H1 (cell line): ENCODE measurements at regions of chr5 and their contacts with region 1.

Region 1: DNA sequence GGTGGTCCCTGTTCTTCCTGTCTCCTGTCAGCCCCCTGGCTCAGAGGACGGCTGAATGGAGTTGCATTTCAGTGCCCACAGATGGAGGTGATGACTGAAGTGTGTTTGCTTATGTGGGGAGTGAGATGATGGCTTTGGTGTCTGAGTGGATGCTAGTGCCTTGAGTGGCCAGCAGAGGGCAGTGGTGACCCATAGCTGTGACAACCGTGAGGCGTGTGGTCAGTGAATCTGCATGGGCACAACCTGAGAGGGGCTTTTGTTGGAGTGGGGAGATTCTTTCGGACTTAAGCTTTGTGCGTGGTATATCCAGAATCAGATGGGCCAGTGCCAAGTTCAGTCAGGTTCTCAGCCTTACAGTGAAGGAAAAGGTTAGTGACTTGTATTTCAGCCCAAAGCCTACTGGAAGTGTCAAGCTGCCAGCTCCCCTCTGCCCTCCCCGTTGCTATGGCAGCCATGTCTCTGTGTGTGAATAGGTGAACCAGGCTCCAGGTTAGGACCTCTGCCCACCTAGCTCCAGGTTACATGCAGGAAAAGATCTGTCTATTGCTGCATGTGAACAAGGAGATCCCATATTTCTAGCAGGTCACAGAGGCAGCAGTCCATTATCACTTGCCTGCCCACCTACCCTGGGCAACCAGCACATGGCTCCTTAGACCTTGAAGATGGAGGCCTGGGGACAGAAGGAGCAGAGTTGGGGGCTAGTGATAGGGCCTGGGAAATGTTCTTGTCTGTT is 14.7 kb upstream of the CXXC5 start:
- DNase-seq: peak in 1 of 2 experiments; percentile 83
- H3K4me3 ChIP-seq: no peak overlapping the region
- H3K27ac ChIP-seq: no peak overlapping the region
- H3K4me1 ChIP-seq: peaks cover 14 to 27% (median 20%) of the 10 kb centered on the region in 4 experiments
- H3K27me3 ChIP-seq: no peaks in the 10 kb centered on the region
- CTCF ChIP-seq: peak in 2 of 3 experiments; percentile 88 to 100; a peak in 3 of 4 replicates
- EP300 ChIP-seq: no peak
- POLR2A ChIP-seq: peak in 1 of 2 experiments; percentile 34; a peak in 1 of 3 replicates
- RAD21 ChIP-seq: peak; percentile 94 to 95

Region 2: DNA sequence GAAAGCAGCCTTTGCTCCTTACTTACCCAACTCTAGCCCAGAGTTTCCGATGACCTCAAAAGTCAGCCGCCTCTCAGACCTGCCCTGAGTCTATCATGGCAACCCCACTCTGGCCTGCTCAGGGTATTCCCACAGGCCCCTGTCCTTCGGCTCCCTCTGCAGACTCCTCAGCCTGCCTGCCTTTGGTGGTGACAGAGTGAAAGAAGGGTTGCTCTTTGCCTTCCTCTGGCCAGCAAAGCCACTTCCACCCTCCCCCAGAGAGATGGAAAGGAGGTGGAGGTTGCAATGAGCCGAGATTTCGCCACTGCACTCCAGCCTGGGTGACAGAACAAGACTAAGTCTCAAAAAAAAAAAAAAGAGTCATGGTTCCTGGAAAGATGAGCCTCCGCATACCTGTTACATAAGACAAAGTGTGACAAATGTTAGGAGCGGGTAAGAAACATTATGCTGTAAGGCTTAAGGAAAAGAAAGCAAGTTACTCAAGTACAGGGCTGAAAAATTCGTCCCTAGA is 165.0 kb before region 1 on chr5:
- CTCF ChIA-PET with region 1: no interaction called
- POLR2A ChIA-PET with region 1: no interaction called
- DNase-seq: no peak
- H3K4me3 ChIP-seq: no peak overlapping the region
- H3K27ac ChIP-seq: no peak overlapping the region
- H3K4me1 ChIP-seq: peaks cover 3 to 26% (median 10%) of the 10 kb centered on the region in 4 experiments
- H3K27me3 ChIP-seq: 0 out of 7 replicates have a peak, but pooled peaks cover 0 to 2% (median 0%) of the 10 kb centered on the region in 4 experiments
- CTCF ChIP-seq: peak; percentile 18 to 40 (median 31)
- EP300 ChIP-seq: no peak
- POLR2A ChIP-seq: no peak
- RAD21 ChIP-seq: peak; percentile 23 to 58; a peak in 3 of 4 replicates

Region 3: GRCh38 chr5:139574641-139575312 is 58.7 kb before region 1 on chr5:
- CTCF ChIA-PET with region 1: interaction called, 10 read pairs
- POLR2A ChIA-PET with region 1: interaction called, 4 read pairs
- DNase-seq: no peak
- H3K4me3 ChIP-seq: no peak overlapping the region
- H3K27ac ChIP-seq: no peak overlapping the region
- H3K4me1 ChIP-seq: peaks cover 0 to 7% (median 0%) of the 10 kb centered on the region in 4 experiments; a peak in 2 of 7 replicates
- H3K27me3 ChIP-seq: no peaks in the 10 kb centered on the region
- CTCF ChIP-seq: peak in 2 of 3 experiments; percentile 48 to 67; a peak in 2 of 4 replicates
- EP300 ChIP-seq: no peak
- POLR2A ChIP-seq: no peak
- RAD21 ChIP-seq: peak; percentile 57 to 63

Region 4: DNA sequence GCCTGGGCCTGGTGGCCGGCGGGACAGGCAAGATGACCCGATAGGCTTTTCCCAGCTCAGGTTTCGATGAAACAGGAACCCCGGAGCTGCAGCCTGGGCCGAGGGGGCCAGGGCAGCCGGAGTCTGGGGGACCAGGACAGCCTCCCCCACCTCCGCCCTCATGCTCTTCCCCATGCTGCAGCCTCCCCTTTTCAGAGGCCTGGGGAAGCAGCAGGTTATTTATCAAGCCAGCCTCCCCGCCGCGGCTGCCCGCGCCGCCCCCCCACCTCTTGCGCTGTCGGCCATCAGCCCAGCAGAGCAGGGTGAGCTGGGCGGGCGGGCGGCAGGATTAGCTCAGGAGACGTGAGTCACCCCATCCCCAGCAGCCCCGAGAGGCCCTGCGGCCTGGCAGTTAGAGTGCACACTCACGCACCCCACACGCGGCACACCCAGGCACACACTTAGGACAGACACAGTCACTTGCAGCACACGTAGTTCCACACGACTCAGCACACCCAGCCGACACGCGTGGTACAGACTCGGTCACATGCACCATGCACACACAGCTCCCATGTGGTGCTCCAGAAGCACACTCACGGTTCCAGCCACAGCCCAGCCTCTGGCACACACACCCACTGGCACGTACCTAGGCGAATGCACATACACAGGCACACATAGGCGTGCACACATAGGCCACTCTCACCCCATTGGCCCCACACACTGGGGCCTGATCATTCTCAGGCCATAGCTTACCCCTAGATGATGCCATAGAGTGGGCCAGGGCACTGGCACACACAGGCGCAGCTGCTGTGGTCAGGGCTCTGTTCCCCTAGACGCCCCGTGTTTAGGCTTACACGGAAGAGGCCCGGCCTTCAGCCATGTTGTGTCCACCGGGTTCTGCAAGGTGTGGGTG is 27.7 kb after region 1 on chr5:
- CTCF ChIA-PET with region 1: interaction called, 171 read pairs
- POLR2A ChIA-PET with region 1: interaction called, 212 read pairs
- DNase-seq: no peak
- H3K4me3 ChIP-seq: no peak overlapping the region
- H3K27ac ChIP-seq: 0 out of 2 replicates have a peak overlapping the region, but pooled peaks have one; percentile 32
- H3K4me1 ChIP-seq: peaks cover 13 to 55% (median 46%) of the 10 kb centered on the region in 4 experiments
- H3K27me3 ChIP-seq: no peaks in the 10 kb centered on the region
- CTCF ChIP-seq: no peak
- EP300 ChIP-seq: no peak
- POLR2A ChIP-seq: no peak
- RAD21 ChIP-seq: no peak

Region 5: DNA sequence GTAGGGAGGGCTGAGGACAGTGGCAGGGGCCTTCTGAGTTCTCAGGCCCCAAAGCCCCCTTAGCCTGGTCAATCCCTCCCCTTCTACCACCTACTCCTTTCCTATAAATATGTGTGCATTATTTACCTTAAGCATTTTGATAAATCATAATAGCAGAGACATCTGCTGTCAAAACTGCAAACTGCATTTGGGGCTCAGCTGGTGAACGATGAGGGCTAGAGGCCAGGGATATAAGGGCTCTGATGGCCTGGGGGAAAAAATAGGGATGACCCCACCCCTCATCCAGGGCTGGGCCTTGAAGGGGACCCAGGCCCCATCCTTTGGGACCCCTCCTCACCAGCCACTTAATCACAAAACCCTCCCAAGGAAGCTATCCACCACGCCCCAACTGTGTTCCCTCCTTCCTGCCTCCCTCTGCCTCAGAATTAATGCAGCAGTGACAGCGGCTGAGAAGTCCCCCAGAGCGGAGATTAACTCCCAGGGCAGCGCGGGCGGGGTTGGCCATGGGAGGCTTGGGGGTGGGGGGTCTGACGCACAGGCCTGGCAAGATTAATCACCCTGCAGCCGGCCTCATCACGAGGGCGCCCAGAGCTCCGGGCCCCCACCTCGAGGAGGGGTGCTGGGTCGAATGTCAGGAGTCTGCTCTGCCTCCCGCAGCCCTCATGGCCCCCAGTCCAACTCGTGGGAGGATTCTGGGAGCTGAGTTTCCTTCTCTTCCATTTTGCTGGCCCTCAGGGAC is 56.8 kb after region 1 on chr5:
- CTCF ChIA-PET with region 1: interaction called, 97 read pairs
- POLR2A ChIA-PET with region 1: interaction called, 11 read pairs
- DNase-seq: no peak
- H3K4me3 ChIP-seq: no peak overlapping the region
- H3K27ac ChIP-seq: no peak overlapping the region
- H3K4me1 ChIP-seq: peaks cover 27 to 51% (median 43%) of the 10 kb centered on the region in 4 experiments
- H3K27me3 ChIP-seq: peaks cover 0 to 5% (median 0%) of the 10 kb centered on the region in 4 experiments; a peak in 3 of 7 replicates
- CTCF ChIP-seq: no peak
- EP300 ChIP-seq: no peak
- POLR2A ChIP-seq: no peak
- RAD21 ChIP-seq: 0 out of 4 replicates have a peak, but pooled peaks of 1 of the 2 experiments have one; percentile 19

Region 6: GRCh38 chr5:139716966-139717620 is 83.6 kb after region 1 on chr5:
- CTCF ChIA-PET with region 1: interaction called, 141 read pairs
- POLR2A ChIA-PET with region 1: interaction called, 78 read pairs
- DNase-seq: no peak
- H3K4me3 ChIP-seq: no peak overlapping the region
- H3K27ac ChIP-seq: no peak overlapping the region
- H3K4me1 ChIP-seq: peaks cover 0 to 5% (median 4%) of the 10 kb centered on the region in 4 experiments; a peak in 4 of 7 replicates
- H3K27me3 ChIP-seq: peaks cover 0 to 11% (median 7%) of the 10 kb centered on the region in 4 experiments; a peak in 4 of 7 replicates
- CTCF ChIP-seq: no peak
- EP300 ChIP-seq: no peak
- POLR2A ChIP-seq: no peak
- RAD21 ChIP-seq: no peak

Region 7: DNA sequence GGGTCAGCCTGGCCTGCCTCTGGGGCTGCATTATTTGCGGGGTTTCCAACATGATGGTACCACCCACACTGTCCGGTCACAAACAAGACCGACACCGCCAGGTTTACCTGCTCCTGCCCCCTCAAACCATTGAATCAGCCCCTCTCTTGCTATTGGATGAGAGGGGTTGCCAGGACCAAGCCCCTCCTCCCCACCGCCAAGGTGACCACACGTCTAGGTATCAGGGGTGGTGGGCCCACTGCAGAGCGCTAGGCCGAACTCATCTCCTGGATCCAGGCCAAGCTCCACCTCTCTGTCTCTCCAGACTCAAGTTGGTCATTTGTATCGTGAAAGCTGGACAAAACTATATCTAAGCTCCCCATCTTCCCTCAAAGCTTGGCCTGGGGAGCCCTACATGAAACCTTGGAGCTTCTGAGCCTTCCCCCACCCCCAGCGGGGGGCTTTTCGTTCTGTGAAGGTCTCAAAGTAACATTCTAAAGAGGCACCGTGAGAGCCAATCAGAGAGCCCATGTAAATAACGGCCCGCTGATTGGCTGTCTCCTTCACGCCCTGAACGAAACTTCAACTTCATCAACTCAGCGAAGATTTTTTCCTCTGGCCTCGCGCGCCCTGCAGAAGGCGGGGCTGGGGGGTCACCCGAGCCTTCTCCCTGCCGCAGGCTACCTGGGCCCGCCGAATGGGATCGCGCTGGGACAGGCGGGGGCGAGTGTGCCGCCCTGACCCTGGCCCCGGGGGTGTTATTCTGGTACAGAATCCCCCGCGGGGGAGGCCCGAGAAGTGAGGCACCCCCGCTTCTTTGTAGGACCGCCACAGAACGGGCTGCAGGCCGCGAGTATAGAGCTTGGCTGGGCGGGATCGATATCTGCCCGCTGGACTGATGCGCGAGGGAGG is 112.6 kb after region 1 on chr5:
- CTCF ChIA-PET with region 1: interaction called, 39 read pairs
- POLR2A ChIA-PET with region 1: interaction called, 4 read pairs
- DNase-seq: peak; percentile 75 to 89
- H3K4me3 ChIP-seq: peak overlapping the region; percentile 30 to 64 (median 56)
- H3K27ac ChIP-seq: no peak overlapping the region
- H3K4me1 ChIP-seq: peaks cover 3 to 44% (median 29%) of the 10 kb centered on the region in 4 experiments
- H3K27me3 ChIP-seq: peaks cover 24 to 50% (median 42%) of the 10 kb centered on the region in 4 experiments
- CTCF ChIP-seq: no peak
- EP300 ChIP-seq: no peak
- POLR2A ChIP-seq: no peak
- RAD21 ChIP-seq: no peak

Region 8: DNA sequence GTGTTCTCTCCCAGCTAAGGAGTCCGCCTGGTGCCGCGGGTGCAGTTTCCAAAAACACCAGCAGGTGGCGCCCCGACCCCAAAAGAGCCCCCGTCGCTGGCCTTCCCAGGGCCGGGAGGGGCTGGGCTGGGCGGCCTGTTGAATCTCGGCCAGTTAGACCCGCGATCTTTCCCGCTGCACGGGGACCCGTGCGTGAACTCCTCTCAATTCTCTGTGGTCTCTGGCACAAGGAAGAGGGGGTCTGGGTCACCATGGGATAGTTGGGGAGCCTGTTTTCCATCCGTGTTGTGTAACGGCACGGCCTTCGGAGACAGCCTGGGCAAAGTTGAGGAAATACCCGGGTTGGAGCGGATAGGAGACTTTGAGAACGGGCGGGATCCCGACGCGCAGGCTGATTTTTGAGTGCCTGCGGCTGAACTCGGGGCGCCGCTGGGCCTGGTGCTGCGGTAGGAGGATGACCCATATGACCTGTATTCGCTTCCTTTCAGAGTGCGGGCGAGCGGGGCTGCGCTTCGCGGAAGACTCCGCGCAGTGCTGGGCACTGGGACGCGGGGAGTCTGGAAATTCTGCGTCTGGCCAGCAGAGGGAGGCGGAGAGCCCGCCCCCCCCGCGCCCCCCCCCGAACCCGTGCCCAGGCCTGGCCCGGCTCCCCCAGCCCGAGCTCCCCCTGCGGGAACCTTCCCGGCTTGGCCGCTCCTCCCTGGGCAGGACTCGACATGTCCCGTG is 154.3 kb after region 1 on chr5:
- CTCF ChIA-PET with region 1: interaction called, 24 read pairs
- POLR2A ChIA-PET with region 1: no interaction called
- DNase-seq: peak in 1 of 2 experiments; percentile 100
- H3K4me3 ChIP-seq: peak overlapping the region; percentile 39 to 82 (median 66)
- H3K27ac ChIP-seq: no peak overlapping the region
- H3K4me1 ChIP-seq: peaks cover 0 to 5% (median 5%) of the 10 kb centered on the region in 4 experiments; a peak in 5 of 7 replicates
- H3K27me3 ChIP-seq: peaks cover 0 to 22% (median 16%) of the 10 kb centered on the region in 4 experiments; a peak in 5 of 7 replicates
- CTCF ChIP-seq: peak in 2 of 3 experiments; percentile 95 to 98; a peak in 3 of 4 replicates
- EP300 ChIP-seq: no peak
- POLR2A ChIP-seq: no peak
- RAD21 ChIP-seq: peak; percentile 96 to 99

Region 9: GRCh38 chr5:139797856-139798510 is 164.5 kb after region 1 on chr5:
- CTCF ChIA-PET with region 1: no interaction called
- POLR2A ChIA-PET with region 1: no interaction called
- DNase-seq: no peak
- H3K4me3 ChIP-seq: no peak overlapping the region
- H3K27ac ChIP-seq: no peak overlapping the region
- H3K4me1 ChIP-seq: peaks cover 2 to 7% (median 2%) of the 10 kb centered on the region in 4 experiments; a peak in 3 of 7 replicates
- H3K27me3 ChIP-seq: peaks cover 41 to 64% (median 58%) of the 10 kb centered on the region in 4 experiments
- CTCF ChIP-seq: no peak
- EP300 ChIP-seq: no peak
- POLR2A ChIP-seq: no peak
- RAD21 ChIP-seq: no peak

Region 10: DNA sequence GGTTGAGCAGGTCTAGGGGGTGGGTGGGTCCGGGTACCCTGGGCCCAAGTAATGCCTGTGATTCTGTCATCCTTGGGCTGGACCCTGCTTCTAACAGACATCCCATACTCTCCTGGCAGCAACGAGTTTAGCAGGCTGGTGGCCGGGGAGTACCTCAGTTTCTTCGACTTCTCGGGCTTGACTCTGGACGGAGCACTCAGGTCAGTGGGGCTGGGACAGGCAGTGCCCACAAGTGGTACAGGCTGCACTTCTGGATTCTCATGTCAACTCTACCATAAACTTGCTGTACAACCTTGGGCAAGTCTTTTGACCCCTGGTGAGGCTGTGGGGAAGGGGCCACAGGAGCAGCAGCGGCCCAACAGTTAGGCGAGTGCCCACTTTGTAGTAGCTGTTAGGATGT is 183.9 kb after region 1 on chr5:
- CTCF ChIA-PET with region 1: no interaction called
- POLR2A ChIA-PET with region 1: no interaction called
- DNase-seq: no peak
- H3K4me3 ChIP-seq: no peak overlapping the region
- H3K27ac ChIP-seq: no peak overlapping the region
- H3K4me1 ChIP-seq: peaks cover 0 to 2% (median under 1%) of the 10 kb centered on the region in 4 experiments; a peak in 3 of 7 replicates
- H3K27me3 ChIP-seq: peaks cover 0 to 2% (median 0%) of the 10 kb centered on the region in 4 experiments; a peak in 1 of 7 replicates
- CTCF ChIP-seq: no peak
- EP300 ChIP-seq: no peak
- POLR2A ChIP-seq: no peak
- RAD21 ChIP-seq: no peak